Motor neuron (in vitro differentiated cells): ENCODE measurements at regions of chr3 and their contacts with region 1.

Region 1: GRCh38 chr3:156135921-156136638 is 15.7 kb downstream of the KCNAB1 start:
- ATAC-seq: peak in 1 of 8 experiments; percentile 30
- H3K4me3 ChIP-seq: no peak overlapping the region
- H3K27ac ChIP-seq: no peak overlapping the region
- H3K4me1 ChIP-seq: no peaks in the 10 kb centered on the region

Region 2: DNA sequence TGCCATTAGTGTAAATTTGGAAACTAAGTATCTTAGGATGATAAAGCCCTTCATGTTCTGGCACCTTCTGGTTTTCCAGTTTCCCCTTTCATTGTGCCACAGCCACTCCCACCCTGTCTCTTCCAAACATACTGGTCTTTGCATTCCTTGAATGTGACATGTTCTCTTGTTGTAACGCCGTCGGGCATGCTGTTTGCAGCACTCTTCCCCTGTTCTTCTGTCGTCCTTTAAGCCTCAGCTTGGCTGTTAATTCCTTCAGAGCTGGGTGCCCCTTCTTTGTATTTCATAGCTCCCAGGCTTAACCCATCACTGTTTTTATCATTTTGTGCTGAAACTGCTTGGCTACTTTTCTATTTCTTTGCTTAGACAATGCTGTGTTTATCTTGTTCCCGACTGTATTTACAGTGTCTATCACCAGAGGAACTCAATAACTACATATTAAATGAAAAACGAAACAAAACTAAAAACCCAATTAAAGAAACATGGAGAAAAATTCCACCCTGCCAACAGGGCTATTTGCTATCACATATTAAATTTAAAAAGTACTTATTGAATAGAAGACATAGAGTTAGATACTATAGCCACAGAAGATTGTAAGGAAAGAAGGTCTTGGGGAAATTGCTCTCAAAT is 111.1 kb before region 1 on chr3:
- in situ Hi-C with region 1: loop called in 1 of 9 experiments (anchors 25 kb)
- ATAC-seq: peak in 5 of 8 experiments; percentile 33 to 92 (median 78)
- H3K4me3 ChIP-seq: no peak overlapping the region
- H3K27ac ChIP-seq: no peak overlapping the region
- H3K4me1 ChIP-seq: peaks cover 2 to 10% of the 10 kb centered on the region in 2 donors

Region 3: DNA sequence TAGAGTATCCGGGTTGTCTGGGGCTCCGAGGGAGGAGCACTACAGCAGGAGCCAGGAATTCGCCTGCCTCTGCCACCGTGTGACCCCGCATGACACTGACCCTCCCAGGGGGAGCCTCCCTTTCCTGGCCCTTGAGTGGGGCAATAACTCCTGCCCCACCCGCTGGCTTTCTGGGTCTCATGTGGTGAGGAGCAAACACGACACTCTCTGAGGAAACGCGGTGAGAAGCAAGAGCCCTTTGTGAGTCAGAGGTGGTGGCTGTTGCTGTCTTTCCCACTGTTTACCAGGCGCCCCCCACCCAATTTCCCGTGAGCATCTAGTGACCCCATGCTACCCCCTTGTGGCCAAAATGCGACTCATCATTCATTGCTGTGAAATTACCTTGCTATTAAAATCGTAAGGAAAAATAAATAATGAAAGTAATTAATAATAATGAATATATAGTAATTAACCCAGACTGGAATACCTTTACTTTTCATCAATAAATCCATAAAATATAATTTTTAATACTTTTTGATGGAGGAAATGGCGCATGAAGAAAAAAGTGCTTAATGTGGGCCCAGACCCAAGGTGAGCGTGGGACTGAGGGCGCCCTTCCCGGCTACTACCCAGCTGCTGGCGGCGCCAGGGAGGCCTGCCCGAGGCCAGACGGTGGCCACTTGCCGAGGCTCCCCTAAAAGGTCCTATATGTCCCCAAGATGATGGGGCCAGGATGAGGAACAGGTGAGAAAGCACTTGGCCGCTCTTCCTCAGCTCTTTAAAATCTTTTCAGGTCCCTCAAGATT is 994.6 kb after region 1 on chr3:
- in situ Hi-C with region 1: loop called in 1 of 9 experiments (anchors 25 kb)
- ATAC-seq: peak; percentile 36 to 71 (median 63)
- H3K4me3 ChIP-seq: no peak overlapping the region
- H3K27ac ChIP-seq: peak overlapping the region; percentile 2 to 20
- H3K4me1 ChIP-seq: peaks cover 20 to 24% of the 10 kb centered on the region in 2 donors